ENCODE measurements at regions of chr6 and their contacts with region 1.

Region 1: GRCh38 chr6:154928325-154928922 is 66.7 kb upstream of the TIAM2 start:
- DNase-seq: peak; percentile 15
- H3K4me3 ChIP-seq: no peak overlapping the region
- H3K27ac ChIP-seq: no peak overlapping the region
- H3K4me1 ChIP-seq: peaks cover 13% of the 10 kb centered on the region
- H3K27me3 ChIP-seq: no peaks in the 10 kb centered on the region
- CTCF ChIP-seq: peak; percentile 65 to 75 (median 73)

Region 2: GRCh38 chr6:155126727-155127439 is 198.5 kb after region 1 on chr6:
- dilution Hi-C with region 1: loop called (anchors 25 kb)
- DNase-seq: no peak
- H3K4me3 ChIP-seq: no peak overlapping the region
- H3K27ac ChIP-seq: no peak overlapping the region
- H3K4me1 ChIP-seq: no peaks in the 10 kb centered on the region
- H3K27me3 ChIP-seq: no peaks in the 10 kb centered on the region
- CTCF ChIP-seq: no peak